ENCODE measurements at regions of chr3 and their contacts with region 1.

Region 1: DNA sequence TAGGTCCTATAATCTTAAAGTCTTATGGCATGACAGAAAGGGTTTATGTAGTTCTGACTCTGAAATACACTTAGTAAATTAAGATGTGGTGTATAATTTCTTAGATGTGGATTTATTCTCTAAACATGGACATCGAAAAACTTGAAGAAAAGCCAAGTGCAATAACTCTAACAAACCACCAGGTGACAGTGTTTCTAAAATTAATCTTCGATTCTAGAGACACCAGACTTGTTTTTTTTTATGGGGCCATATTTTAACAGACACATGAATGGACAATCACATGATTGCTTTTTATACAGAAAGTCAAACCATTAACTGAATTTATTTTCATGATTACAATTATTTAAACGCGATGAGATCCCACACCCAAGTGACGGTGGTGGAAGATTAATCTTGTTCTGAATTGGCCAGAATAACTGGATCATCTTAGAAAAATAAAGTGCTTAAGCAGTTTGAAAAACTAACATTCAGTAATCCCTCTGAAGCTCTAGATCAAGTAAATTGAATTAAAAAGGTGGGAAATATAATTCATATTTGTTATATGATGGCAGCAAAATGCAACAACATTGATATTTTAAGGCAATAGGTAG is 305.1 kb downstream of the LSAMP start:
- DNase-seq: no peak
- CTCF ChIP-seq: peak; percentile 48

Region 2: GRCh38 chr3:116211901-116212300 is 71.7 kb after region 1 on chr3:
- in situ Hi-C with region 1: no loop called
- DNase-seq: no peak
- CTCF ChIP-seq: no peak

Region 3: DNA sequence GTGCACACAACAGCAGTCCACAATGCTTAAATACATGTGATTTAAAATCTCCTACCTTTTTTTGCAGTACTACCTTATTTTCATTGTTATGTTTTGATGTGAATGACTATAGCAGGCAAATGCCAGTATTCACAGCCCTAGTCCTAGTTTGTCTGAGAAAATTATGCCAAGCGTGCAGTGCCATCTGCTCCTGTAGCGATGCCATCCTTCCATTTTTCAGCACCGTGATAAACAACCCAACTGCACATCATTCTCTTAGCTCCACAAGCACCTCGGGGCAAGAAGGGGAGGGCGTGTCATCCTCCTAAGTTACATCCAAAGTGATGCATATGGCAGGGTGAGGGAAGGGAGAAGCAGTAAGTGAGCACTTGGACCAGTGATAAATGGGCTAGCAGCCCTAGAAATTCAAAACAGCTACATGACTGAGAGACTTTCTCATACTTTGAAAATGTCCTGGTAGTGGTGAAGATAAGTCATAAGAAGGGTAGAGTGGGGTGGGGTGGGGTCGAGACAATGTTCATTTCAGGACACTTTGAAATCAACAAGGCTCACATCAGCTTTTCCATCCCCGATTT is 106.3 kb after region 1 on chr3:
- in situ Hi-C with region 1: no loop called
- DNase-seq: no peak
- CTCF ChIP-seq: no peak

Region 4: GRCh38 chr3:116770815-116771450 is 630.7 kb after region 1 on chr3:
- in situ Hi-C with region 1: loop called (anchors 25 kb)
- DNase-seq: peak; percentile 42
- CTCF ChIP-seq: peak; percentile 94

Measured in GM13976 (cell line).